ENCODE measurements at regions of chr10 and their contacts with region 1.

Region 1: GRCh38 chr10:78787125-78787524 is 281.6 kb upstream of the ZMIZ1 start:
- DNase-seq: no peak
- ATAC-seq: no peak
- H3K4me3 ChIP-seq: no peak overlapping the region
- H3K4me3 Mint-ChIP-seq: no peak overlapping the region
- H3K27ac ChIP-seq: no peak overlapping the region
- H3K27ac Mint-ChIP-seq: no peak overlapping the region
- H3K4me1 ChIP-seq: no peaks in the 10 kb centered on the region
- H3K4me1 Mint-ChIP-seq: no peaks in the 10 kb centered on the region
- H3K27me3 ChIP-seq: peaks cover 0 to 8% of the 10 kb centered on the region in 2 experiments
- H3K27me3 Mint-ChIP-seq: peaks cover 17 to 25% of the 10 kb centered on the region in 2 donors

Region 2: GRCh38 chr10:78765726-78766335 is 21.3 kb before region 1 on chr10:
- CTCF ChIA-PET with region 1: no interaction called
- POLR2A ChIA-PET with region 1: interaction called in 1 of 2 experiments, 11 read pairs
- DNase-seq: no peak
- ATAC-seq: no peak
- H3K4me3 ChIP-seq: no peak overlapping the region
- H3K4me3 Mint-ChIP-seq: no peak overlapping the region
- H3K27ac ChIP-seq: no peak overlapping the region
- H3K27ac Mint-ChIP-seq: no peak overlapping the region
- H3K4me1 ChIP-seq: no peaks in the 10 kb centered on the region
- H3K4me1 Mint-ChIP-seq: no peaks in the 10 kb centered on the region
- H3K27me3 ChIP-seq: peaks cover 0 to 4% of the 10 kb centered on the region in 2 experiments
- H3K27me3 Mint-ChIP-seq: no peaks in the 10 kb centered on the region

Region 3: GRCh38 chr10:78805176-78805575 is 18.1 kb after region 1 on chr10:
- CTCF ChIA-PET with region 1: no interaction called
- POLR2A ChIA-PET with region 1: no interaction called
- DNase-seq: no peak
- ATAC-seq: no peak
- H3K4me3 ChIP-seq: no peak overlapping the region
- H3K4me3 Mint-ChIP-seq: no peak overlapping the region
- H3K27ac ChIP-seq: no peak overlapping the region
- H3K27ac Mint-ChIP-seq: no peak overlapping the region
- H3K4me1 ChIP-seq: no peaks in the 10 kb centered on the region
- H3K4me1 Mint-ChIP-seq: no peaks in the 10 kb centered on the region
- H3K27me3 ChIP-seq: peaks cover 0 to 28% of the 10 kb centered on the region in 2 experiments
- H3K27me3 Mint-ChIP-seq: peaks cover 6 to 7% of the 10 kb centered on the region in 2 donors

Measured in T-cell (primary cell).